Naive thymus-derived CD4-positive, alpha-beta T cell (primary cell): ENCODE measurements at regions of chr6 and their contacts with region 1.

Region 1: GRCh38 chr6:6676910-6677441 is 88.5 kb downstream of the LY86 start:
- DNase-seq: peak; percentile 57 to 88 (median 77)
- ATAC-seq: peak; percentile 93
- H3K4me3 ChIP-seq: no peak overlapping the region
- H3K4me3 Mint-ChIP-seq: peak overlapping the region in 8 of 10 donors; percentile 0 to 73 (median 43)
- H3K27ac ChIP-seq: no peak overlapping the region
- H3K27ac Mint-ChIP-seq: peak overlapping the region in 6 of 9 donors; percentile 28 to 95 (median 80)
- H3K4me1 ChIP-seq: peaks cover 0 to 6% of the 10 kb centered on the region in 2 donors
- H3K4me1 Mint-ChIP-seq: peaks cover 4 to 41% (median 11%) of the 10 kb centered on the region in 7 donors
- H3K27me3 ChIP-seq: no peaks in the 10 kb centered on the region
- H3K27me3 Mint-ChIP-seq: peaks cover 0 to 5% (median 0%) of the 10 kb centered on the region in 5 donors

Region 2: DNA sequence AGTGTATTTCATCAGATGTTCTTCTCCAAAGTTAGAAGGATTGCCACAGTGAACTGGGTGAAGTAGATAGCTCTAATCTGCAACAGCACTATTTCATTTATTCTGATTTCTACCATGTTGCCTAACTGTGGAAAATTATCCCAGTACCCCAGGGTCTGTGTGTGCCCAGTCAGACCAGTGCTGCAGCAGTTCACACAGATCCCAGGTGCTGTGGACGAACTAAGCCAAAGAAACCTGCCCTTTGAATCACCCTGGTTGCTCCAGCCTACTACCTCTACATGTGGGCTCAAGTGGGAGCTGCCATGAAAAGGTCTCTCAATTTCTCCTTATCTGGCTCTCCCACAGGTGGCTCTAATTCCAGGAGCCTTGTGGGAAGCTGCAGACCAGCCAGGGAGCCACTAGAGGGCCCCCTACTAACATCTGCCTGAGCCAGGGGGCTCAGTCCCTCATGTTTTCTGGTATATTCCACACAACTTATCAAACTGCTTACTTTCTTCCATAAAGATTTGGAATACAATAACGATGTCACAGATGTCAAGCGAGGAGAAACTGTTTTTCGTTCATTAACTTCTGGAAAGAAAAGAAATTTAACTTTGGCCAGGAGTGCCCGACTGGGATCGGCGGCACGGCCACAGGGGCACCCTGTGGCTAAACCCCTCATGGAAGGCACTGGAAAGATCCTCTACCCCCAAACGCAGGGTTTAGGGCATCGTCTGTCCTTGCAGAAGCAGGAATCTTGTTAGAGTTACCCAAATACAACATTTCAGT is 120.1 kb before region 1 on chr6:
- CTCF ChIA-PET with region 1: interaction called, 12 read pairs
- POLR2A ChIA-PET with region 1: interaction called, 3 read pairs
- intact Hi-C with region 1: loop called in 1 of 2 experiments (anchors 1 kb)
- DNase-seq: peak in 7 of 9 donors; percentile 30 to 68 (median 57)
- ATAC-seq: peak; percentile 76
- H3K4me3 ChIP-seq: no peak overlapping the region
- H3K4me3 Mint-ChIP-seq: no peak overlapping the region
- H3K27ac ChIP-seq: no peak overlapping the region
- H3K27ac Mint-ChIP-seq: peak overlapping the region in 5 of 9 donors; percentile 19 to 64 (median 32)
- H3K4me1 ChIP-seq: peaks cover 0 to 4% of the 10 kb centered on the region in 2 donors
- H3K4me1 Mint-ChIP-seq: peaks cover 0 to 50% (median 18%) of the 10 kb centered on the region in 7 donors
- H3K27me3 ChIP-seq: no peaks in the 10 kb centered on the region
- H3K27me3 Mint-ChIP-seq: peaks cover 0 to 15% (median 0%) of the 10 kb centered on the region in 5 donors

Region 3: DNA sequence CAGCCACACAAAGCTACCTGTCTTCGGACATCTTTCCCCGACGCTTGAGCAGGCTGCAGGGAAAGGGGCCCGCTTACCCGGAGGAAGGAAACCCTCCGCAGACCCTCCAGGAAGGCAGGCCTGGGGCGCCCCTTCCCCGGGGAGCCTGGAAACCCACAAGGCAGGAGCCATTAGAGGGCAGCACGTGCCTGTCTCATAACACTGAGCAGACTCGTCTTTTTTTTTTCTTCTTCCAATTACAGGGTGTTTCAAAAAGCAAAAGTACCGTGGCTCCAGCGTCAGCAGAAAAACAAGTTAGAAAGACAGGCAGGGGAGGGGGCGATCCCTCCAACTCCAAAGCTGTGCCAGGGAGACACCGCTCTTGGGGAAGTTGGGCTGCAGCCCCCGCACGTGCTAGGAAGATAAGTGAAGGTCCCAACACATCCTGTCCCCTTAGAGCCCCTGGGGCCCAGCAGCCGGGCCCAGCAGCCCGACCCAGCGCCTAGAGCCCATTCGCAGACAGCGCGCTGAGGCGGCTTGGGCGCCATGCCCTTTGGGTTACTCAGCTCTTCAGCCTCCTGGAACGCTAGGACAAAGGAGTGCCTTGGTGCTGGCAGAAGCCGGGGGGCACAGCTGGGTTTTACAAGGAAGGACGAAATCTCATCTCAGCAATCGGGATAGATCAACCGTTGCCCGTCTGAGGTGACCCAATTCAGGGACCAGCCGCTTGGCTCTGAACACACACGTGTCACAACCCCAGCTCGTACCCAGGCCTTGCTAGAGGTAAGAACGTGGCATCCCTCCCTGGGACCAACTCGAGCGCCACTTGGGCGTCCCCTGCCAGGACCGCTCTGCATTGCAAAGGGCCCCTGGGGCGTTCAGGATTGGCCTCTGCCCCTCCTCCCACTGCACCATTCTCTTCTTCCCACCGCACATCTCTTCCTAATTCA is 47.8 kb after region 1 on chr6:
- CTCF ChIA-PET with region 1: interaction called, 3 read pairs
- POLR2A ChIA-PET with region 1: no interaction called
- intact Hi-C with region 1: loop called (anchors 1 to 5 kb)
- DNase-seq: peak; percentile 33 to 74 (median 62)
- ATAC-seq: peak; percentile 82
- H3K4me3 ChIP-seq: peak overlapping the region; percentile 44
- H3K4me3 Mint-ChIP-seq: peak overlapping the region; percentile 67 to 89 (median 81)
- H3K27ac ChIP-seq: no peak overlapping the region
- H3K27ac Mint-ChIP-seq: peak overlapping the region; percentile 47 to 84 (median 74)
- H3K4me1 ChIP-seq: peaks cover 0 to 5% of the 10 kb centered on the region in 2 donors
- H3K4me1 Mint-ChIP-seq: peaks cover 6 to 28% (median 12%) of the 10 kb centered on the region in 7 donors
- H3K27me3 ChIP-seq: no peaks in the 10 kb centered on the region
- H3K27me3 Mint-ChIP-seq: peaks cover 0 to 43% (median 0%) of the 10 kb centered on the region in 5 donors

Region 4: GRCh38 chr6:6811151-6812002 is 134.4 kb after region 1 on chr6:
- CTCF ChIA-PET with region 1: no interaction called
- POLR2A ChIA-PET with region 1: no interaction called
- intact Hi-C with region 1: loop called in 1 of 2 experiments (anchors 5 kb)
- DNase-seq: peak in 7 of 9 donors; percentile 54 to 90 (median 73)
- ATAC-seq: peak; percentile 79
- H3K4me3 ChIP-seq: peak overlapping the region; percentile 57
- H3K4me3 Mint-ChIP-seq: peak overlapping the region; percentile 80 to 97 (median 95)
- H3K27ac ChIP-seq: peak overlapping the region; percentile 85
- H3K27ac Mint-ChIP-seq: peak overlapping the region; percentile 86 to 100 (median 99)
- H3K4me1 ChIP-seq: no peaks in the 10 kb centered on the region
- H3K4me1 Mint-ChIP-seq: peaks cover 10 to 28% (median 23%) of the 10 kb centered on the region in 7 donors
- H3K27me3 ChIP-seq: no peaks in the 10 kb centered on the region
- H3K27me3 Mint-ChIP-seq: peaks cover 0 to 35% (median 0%) of the 10 kb centered on the region in 5 donors

Region 5: GRCh38 chr6:8006208-8006607 is 1329.2 kb after region 1 on chr6:
- CTCF ChIA-PET with region 1: no interaction called
- POLR2A ChIA-PET with region 1: no interaction called
- intact Hi-C with region 1: loop called in 1 of 2 experiments (anchors 5 kb)
- DNase-seq: peak in 1 of 9 donors; percentile 2
- ATAC-seq: no peak
- H3K4me3 ChIP-seq: no peak overlapping the region
- H3K4me3 Mint-ChIP-seq: no peak overlapping the region
- H3K27ac ChIP-seq: no peak overlapping the region
- H3K27ac Mint-ChIP-seq: no peak overlapping the region
- H3K4me1 ChIP-seq: no peaks in the 10 kb centered on the region
- H3K4me1 Mint-ChIP-seq: peaks cover 0 to 12% (median 4%) of the 10 kb centered on the region in 7 donors
- H3K27me3 ChIP-seq: no peaks in the 10 kb centered on the region
- H3K27me3 Mint-ChIP-seq: peaks cover 0 to 4% (median 0%) of the 10 kb centered on the region in 5 donors